ENCODE measurements at regions of chr9 and their contacts with region 1.

Region 1: DNA sequence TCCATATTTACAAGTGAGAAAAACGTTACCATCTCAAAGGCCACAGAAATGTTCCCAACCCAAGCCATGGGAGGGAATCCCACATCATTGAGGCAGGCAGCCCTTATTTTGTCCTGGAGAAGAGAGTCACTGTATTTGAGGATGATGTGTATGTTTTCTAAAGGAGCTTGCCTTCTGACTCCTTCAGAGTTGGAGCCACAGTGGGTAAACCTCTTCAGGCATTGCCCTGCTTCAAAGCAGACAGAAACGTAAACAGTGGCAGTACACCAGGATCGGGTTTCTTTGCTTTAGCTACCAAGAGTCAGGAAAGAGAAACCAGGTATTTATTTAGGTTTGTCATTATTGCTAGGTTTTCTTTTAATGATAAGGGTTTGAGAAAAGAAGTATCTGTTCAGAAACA is 45.7 kb downstream of the MUSK start:
- DNase-seq: peak; percentile 74
- ATAC-seq: peak; percentile 95
- H3K4me3 ChIP-seq: peak overlapping the region; percentile 64
- H3K27ac ChIP-seq: peak overlapping the region; percentile 98
- H3K4me1 ChIP-seq: peaks cover 24% of the 10 kb centered on the region
- H3K27me3 ChIP-seq: no peaks in the 10 kb centered on the region
- CTCF ChIP-seq: no peak

Region 2: GRCh38 chr9:110076894-110077725 is 637.2 kb before region 1 on chr9:
- CTCF ChIA-PET with region 1: no interaction called
- POLR2A ChIA-PET with region 1: no interaction called
- intact Hi-C with region 1: no loop called
- DNase-seq: peak; percentile 55
- ATAC-seq: peak; percentile 42; the same call in 1 of the 2 replicates
- H3K4me3 ChIP-seq: no peak overlapping the region
- H3K27ac ChIP-seq: no peak overlapping the region
- H3K4me1 ChIP-seq: peaks cover 24% of the 10 kb centered on the region
- H3K27me3 ChIP-seq: no peaks in the 10 kb centered on the region
- CTCF ChIP-seq: no peak

Region 3: GRCh38 chr9:110650991-110651411 is 63.3 kb before region 1 on chr9:
- CTCF ChIA-PET with region 1: no interaction called
- POLR2A ChIA-PET with region 1: no interaction called
- intact Hi-C with region 1: loop called (anchors 2 kb)
- DNase-seq: peak; percentile 77
- ATAC-seq: peak; percentile 84
- H3K4me3 ChIP-seq: no peak overlapping the region
- H3K27ac ChIP-seq: peak overlapping the region; percentile 89
- H3K4me1 ChIP-seq: peaks cover 26% of the 10 kb centered on the region
- H3K27me3 ChIP-seq: no peaks in the 10 kb centered on the region
- CTCF ChIP-seq: no peak

Region 4: GRCh38 chr9:110850401-110851135 is 136.3 kb after region 1 on chr9:
- CTCF ChIA-PET with region 1: no interaction called
- POLR2A ChIA-PET with region 1: no interaction called
- intact Hi-C with region 1: no loop called
- DNase-seq: peak; percentile 16
- ATAC-seq: no peak
- H3K4me3 ChIP-seq: no peak overlapping the region
- H3K27ac ChIP-seq: no peak overlapping the region
- H3K4me1 ChIP-seq: no peaks in the 10 kb centered on the region
- H3K27me3 ChIP-seq: no peaks in the 10 kb centered on the region
- CTCF ChIP-seq: no peak